CD4-positive, alpha-beta T cell (primary cell): ENCODE measurements at regions of chr12 and their contacts with region 1.

Region 1: DNA sequence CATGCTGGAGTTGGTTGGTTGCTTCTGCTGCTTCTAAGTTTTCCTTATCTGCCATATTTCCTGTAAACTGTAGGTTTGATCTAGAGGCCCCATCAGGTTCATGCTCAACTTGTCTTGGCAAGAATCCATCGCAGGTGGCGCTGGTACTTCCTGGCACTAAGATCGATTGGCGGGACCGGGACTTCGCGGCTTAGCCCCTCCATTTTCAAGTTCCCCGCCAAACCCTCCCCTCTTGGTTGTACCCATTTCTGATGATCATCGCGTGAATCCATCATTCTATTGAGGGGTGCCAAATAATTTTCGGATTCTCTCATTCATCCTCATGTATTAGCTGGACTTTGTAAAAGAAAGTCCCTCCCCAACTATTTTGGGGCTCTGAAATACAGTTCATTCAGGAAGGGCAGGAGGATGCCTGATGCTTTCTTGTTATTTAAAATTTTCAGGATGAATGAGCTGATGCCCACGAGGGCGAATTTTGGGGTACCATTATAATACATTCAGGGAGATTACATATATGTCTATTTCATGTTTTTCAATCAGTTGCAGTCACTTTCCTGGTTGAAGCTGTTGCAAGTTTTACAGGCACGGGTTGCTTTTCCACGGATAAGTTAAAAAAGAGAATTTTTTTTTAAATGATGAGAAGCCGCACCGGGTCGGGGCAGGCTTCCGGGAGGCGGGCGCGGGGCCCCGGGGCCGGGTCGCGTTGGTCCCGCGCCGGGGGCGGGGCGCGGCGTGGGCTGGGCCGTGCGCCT is 395 bp upstream of the BRI3BP start:
- DNase-seq: peak; percentile 66 to 94 (median 80)
- ATAC-seq: peak; percentile 65
- H3K4me3 ChIP-seq: peak overlapping the region; percentile 68
- H3K4me3 Mint-ChIP-seq: peak overlapping the region; percentile 91
- H3K27ac ChIP-seq: peak overlapping the region; percentile 57 to 61
- H3K27ac Mint-ChIP-seq: peak overlapping the region; percentile 76
- H3K4me1 ChIP-seq: peaks cover 44% of the 10 kb centered on the region
- H3K4me1 Mint-ChIP-seq: peaks cover 33% of the 10 kb centered on the region
- H3K27me3 ChIP-seq: no peaks in the 10 kb centered on the region
- H3K27me3 Mint-ChIP-seq: no peaks in the 10 kb centered on the region
- CTCF ChIP-seq: peak; percentile 75

Region 2: DNA sequence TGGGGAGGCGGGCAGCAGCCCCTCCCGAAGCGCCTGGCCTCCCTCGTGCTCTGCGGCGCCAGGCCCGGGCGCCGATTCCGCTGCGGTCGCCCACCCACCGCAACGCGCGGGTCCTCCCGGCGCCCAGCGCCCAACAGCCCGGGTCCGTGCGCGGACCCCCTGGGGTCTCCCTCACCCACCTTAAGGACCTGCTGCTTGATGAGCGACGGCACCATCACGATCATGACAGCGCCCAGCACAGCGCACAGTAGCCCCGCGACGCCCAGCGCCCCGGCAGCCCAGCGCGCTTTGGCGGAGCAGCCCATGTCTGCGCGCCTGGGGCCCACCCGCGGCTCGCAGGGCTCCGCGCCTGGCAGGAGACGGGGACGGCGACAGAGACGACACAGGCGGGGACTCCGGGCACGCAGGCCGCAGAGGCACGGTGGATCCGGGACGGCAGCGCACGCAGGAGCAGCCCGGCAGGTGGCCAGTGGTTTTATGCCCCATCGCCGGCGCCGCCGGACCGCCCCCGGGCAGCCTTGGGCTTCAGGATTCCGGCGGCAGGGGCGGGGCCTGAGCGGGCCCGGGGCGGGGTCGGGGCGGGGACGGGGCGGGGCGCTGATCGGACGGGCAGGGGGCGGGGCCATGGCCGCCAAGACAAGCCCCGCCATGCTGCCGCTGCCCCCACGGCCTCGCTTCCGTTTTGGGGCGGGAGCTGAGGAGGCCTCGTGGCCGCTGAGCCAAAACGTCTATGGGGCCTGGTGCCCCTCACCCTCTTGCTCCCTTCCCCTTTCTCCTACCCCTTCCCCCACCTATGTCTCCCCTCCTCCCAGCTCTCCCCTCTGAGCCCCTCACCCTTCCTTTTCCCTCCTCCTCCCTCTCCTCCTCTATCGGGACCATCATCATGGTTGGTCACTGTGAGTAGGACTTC is 129.4 kb before region 1 on chr12 and contains the start of gene SCARB1:
- CTCF ChIA-PET with region 1: no interaction called
- POLR2A ChIA-PET with region 1: no interaction called
- intact Hi-C with region 1: loop called in 1 of 2 experiments (anchors 5 kb)
- DNase-seq: peak; percentile 53 to 88 (median 71)
- ATAC-seq: peak; percentile 89
- H3K4me3 ChIP-seq: peak within 1 kb of the TSS; percentile 51
- H3K4me3 Mint-ChIP-seq: peak within 1 kb of the TSS; percentile 91
- H3K27ac ChIP-seq: no peak within 1 kb of the TSS
- H3K27ac Mint-ChIP-seq: peak within 1 kb of the TSS; percentile 76
- H3K4me1 ChIP-seq: peaks cover 18% of the 10 kb centered on the region
- H3K4me1 Mint-ChIP-seq: peaks cover 20% of the 10 kb centered on the region
- H3K27me3 ChIP-seq: no peaks in the 10 kb centered on the region
- H3K27me3 Mint-ChIP-seq: no peaks in the 10 kb centered on the region
- CTCF ChIP-seq: no peak
- total RNA-seq, gene SCARB1: 2.3 to 3.7 TPM

Region 3: DNA sequence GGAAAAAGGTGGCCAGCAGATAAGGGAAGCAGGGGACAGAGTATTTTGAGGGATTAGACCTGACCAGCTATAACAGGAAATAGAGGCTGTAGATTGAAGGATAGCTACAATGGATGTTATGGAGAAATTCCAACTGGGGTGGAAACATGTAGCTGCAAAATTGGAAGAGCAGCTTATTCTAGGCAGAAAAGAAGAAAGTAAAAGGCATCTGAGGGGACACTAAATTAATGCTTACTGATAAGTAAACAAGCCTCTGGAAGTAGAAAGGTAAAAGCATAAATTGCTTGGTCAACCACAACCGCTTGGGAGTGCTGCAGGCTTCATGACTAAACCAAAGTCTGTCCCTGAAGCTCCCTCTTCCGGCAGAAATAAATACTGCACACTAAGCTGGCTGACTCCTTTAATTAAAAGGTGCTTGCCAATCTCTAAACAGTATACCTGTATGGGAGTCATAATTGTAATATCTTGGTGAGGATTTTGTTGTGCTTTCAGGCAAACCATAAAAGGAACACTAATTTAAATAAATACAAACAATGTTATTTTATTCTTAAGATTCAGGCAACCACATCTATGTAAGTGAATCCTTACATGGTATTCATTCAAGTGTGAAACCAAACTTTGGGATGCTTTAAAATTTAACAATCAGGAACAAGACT is 86.3 kb before region 1 on chr12:
- CTCF ChIA-PET with region 1: no interaction called
- POLR2A ChIA-PET with region 1: interaction called, 4 read pairs
- intact Hi-C with region 1: loop called in 1 of 2 experiments (anchors 5 kb)
- DNase-seq: peak; percentile 70 to 96 (median 88)
- ATAC-seq: peak; percentile 93
- H3K4me3 ChIP-seq: no peak overlapping the region
- H3K4me3 Mint-ChIP-seq: no peak overlapping the region
- H3K27ac ChIP-seq: no peak overlapping the region
- H3K27ac Mint-ChIP-seq: peak overlapping the region; percentile 28
- H3K4me1 ChIP-seq: peaks cover 17% of the 10 kb centered on the region
- H3K4me1 Mint-ChIP-seq: peaks cover 28% of the 10 kb centered on the region
- H3K27me3 ChIP-seq: no peaks in the 10 kb centered on the region
- H3K27me3 Mint-ChIP-seq: no peaks in the 10 kb centered on the region
- CTCF ChIP-seq: peak; percentile 100

Region 4: DNA sequence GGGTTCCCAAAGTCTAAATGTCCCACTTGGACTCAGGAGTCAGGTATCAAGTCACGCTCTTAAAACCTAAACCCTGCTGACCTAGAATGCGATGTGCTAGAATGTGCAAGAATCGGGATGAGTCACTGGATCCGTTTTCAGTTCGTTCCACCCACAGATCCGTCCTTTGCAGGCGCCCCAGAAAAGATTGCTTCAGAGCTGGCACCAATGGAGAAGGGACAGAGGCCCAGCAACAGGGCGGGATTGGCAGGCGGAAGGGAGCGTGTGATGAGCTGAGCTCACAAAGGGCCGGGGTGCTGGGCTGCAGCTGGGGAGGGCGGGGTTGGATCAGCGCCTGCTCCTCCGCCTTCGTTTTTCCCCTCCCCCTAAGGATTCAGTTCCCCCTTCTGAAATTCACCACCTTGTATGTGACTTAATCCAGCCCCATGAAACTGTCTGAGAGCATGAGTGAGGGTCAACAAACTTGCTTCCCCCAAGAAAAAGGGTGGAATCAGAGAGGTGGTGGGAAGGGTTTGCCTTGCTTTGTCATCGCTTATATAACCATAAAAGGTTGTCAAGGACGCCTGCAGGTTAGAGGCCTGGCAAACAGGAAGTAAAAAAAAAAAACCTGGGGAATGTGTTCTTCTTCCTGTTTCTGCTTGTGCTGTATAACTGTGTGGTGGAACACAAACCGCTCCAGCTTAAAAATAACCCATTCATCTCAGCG is 75.8 kb before region 1 on chr12:
- CTCF ChIA-PET with region 1: no interaction called
- POLR2A ChIA-PET with region 1: interaction called, 12 read pairs
- intact Hi-C with region 1: loop called (anchors 2 kb)
- DNase-seq: peak; percentile 82 to 98 (median 88)
- ATAC-seq: peak; percentile 78
- H3K4me3 ChIP-seq: peak overlapping the region; percentile 54
- H3K4me3 Mint-ChIP-seq: peak overlapping the region; percentile 86
- H3K27ac ChIP-seq: peak overlapping the region; percentile 84 to 97
- H3K27ac Mint-ChIP-seq: peak overlapping the region; percentile 99
- H3K4me1 ChIP-seq: peaks cover 78% of the 10 kb centered on the region
- H3K4me1 Mint-ChIP-seq: peaks cover 89% of the 10 kb centered on the region
- H3K27me3 ChIP-seq: no peaks in the 10 kb centered on the region
- H3K27me3 Mint-ChIP-seq: peaks cover 17% of the 10 kb centered on the region
- CTCF ChIP-seq: no peak

Region 5: GRCh38 chr12:124940549-124941527 is 52.2 kb before region 1 on chr12:
- CTCF ChIA-PET with region 1: interaction called, 5 read pairs
- POLR2A ChIA-PET with region 1: interaction called, 11 read pairs
- intact Hi-C with region 1: loop called in 1 of 2 experiments (anchors 5 kb)
- DNase-seq: peak; percentile 66 to 91 (median 76)
- ATAC-seq: peak; percentile 63
- H3K4me3 ChIP-seq: peak overlapping the region; percentile 70
- H3K4me3 Mint-ChIP-seq: no peak overlapping the region
- H3K27ac ChIP-seq: peak overlapping the region in 1 of 2 donors; percentile 9
- H3K27ac Mint-ChIP-seq: no peak overlapping the region
- H3K4me1 ChIP-seq: peaks cover 28% of the 10 kb centered on the region
- H3K4me1 Mint-ChIP-seq: peaks cover 5% of the 10 kb centered on the region
- H3K27me3 ChIP-seq: no peaks in the 10 kb centered on the region
- H3K27me3 Mint-ChIP-seq: no peaks in the 10 kb centered on the region
- CTCF ChIP-seq: peak; percentile 97

Region 6: DNA sequence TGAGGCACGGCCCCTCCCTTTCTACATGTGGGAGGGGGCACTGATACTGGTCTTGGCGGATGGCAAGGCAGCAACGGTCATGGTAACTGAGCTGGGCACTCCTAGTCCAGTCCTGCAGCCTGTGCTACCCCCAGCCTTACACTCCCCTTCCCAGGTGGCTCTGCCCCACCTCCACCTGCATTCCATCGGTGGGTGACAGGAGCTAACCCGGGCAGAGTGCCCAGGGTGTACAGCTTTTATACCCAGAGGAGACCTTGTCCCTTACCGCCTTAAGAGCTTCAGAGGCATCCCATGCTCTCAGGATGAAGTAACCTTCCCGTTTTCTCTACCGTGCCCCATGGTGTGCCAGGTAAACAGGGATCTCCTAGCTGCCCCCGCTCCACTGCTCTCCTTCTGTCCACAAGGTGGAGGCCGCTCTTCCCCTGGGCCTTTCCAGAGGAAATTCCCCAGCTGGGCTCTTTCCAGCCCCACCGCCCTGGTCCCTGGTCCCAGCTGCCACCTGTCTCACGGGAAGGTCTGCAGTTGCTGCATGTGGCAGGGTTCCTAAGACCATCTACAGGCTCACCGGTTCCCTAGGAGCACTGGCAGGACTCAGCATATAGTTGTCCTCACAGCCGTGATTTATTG is 20.9 kb after region 1 on chr12:
- CTCF ChIA-PET with region 1: no interaction called
- POLR2A ChIA-PET with region 1: no interaction called
- intact Hi-C with region 1: no loop called
- DNase-seq: no peak
- ATAC-seq: no peak
- H3K4me3 ChIP-seq: no peak overlapping the region
- H3K4me3 Mint-ChIP-seq: no peak overlapping the region
- H3K27ac ChIP-seq: no peak overlapping the region
- H3K27ac Mint-ChIP-seq: no peak overlapping the region
- H3K4me1 ChIP-seq: no peaks in the 10 kb centered on the region
- H3K4me1 Mint-ChIP-seq: no peaks in the 10 kb centered on the region
- H3K27me3 ChIP-seq: no peaks in the 10 kb centered on the region
- H3K27me3 Mint-ChIP-seq: no peaks in the 10 kb centered on the region
- CTCF ChIP-seq: no peak

Region 7: GRCh38 chr12:125049093-125049458 is 56.0 kb after region 1 on chr12:
- CTCF ChIA-PET with region 1: interaction called, 3 read pairs
- POLR2A ChIA-PET with region 1: interaction called, 8 read pairs
- intact Hi-C with region 1: loop called (anchors 2 to 5 kb)
- DNase-seq: no peak
- ATAC-seq: no peak
- H3K4me3 ChIP-seq: peak overlapping the region; percentile 66
- H3K4me3 Mint-ChIP-seq: peak overlapping the region; percentile 87
- H3K27ac ChIP-seq: no peak overlapping the region
- H3K27ac Mint-ChIP-seq: peak overlapping the region; percentile 84
- H3K4me1 ChIP-seq: peaks cover 13% of the 10 kb centered on the region
- H3K4me1 Mint-ChIP-seq: peaks cover 12% of the 10 kb centered on the region
- H3K27me3 ChIP-seq: no peaks in the 10 kb centered on the region
- H3K27me3 Mint-ChIP-seq: no peaks in the 10 kb centered on the region
- CTCF ChIP-seq: no peak

Region 8: GRCh38 chr12:125065021-125065795 is 72.2 kb after region 1 on chr12 and contains the start of gene AACS:
- CTCF ChIA-PET with region 1: no interaction called
- POLR2A ChIA-PET with region 1: no interaction called
- intact Hi-C with region 1: loop called (anchors 2 kb)
- DNase-seq: peak; percentile 66 to 89 (median 74)
- ATAC-seq: peak; percentile 95
- H3K4me3 ChIP-seq: peak within 1 kb of the TSS; percentile 64
- H3K4me3 Mint-ChIP-seq: peak within 1 kb of the TSS; percentile 93
- H3K27ac ChIP-seq: no peak within 1 kb of the TSS
- H3K27ac Mint-ChIP-seq: peak within 1 kb of the TSS; percentile 30
- H3K4me1 ChIP-seq: peaks cover 18% of the 10 kb centered on the region
- H3K4me1 Mint-ChIP-seq: peaks cover 20% of the 10 kb centered on the region
- H3K27me3 ChIP-seq: no peaks in the 10 kb centered on the region
- H3K27me3 Mint-ChIP-seq: no peaks in the 10 kb centered on the region
- CTCF ChIP-seq: no peak
- total RNA-seq, gene AACS: 10.8 to 11.7 TPM